Sciatic nerve (tissue), 2 donors: ENCODE measurements at regions of chr18 and their contacts with region 1.

Region 1: DNA sequence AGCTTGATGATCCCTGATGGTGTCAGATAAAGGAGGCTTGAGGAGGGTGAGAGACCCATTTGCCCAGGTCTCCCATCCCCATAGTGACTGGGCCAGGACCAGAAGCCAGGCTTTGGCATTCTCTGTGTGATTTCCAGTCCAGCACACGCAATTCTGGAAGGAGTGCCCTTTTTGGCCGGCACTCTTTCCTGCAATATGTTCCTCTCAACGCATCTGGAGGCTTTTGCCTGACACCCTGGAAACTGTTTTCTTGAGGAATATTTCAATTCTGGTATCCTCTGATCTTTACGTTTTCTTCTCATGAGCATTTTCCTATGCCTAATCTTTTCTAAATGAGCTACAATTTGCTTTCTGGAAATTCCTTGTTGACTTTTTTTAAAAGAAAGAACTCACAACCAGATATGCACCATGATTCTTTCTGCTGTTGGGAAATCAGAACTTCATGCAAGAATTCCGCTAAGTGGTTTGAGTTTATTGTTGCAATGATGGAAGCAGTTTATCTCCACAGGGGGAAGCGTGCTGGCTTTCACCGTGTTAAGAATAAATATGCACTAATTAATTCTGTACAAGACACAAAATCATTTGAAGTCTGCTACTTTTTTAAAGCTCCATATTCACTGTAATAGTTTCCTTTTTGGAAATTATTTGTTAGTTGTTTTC is 143.7 kb downstream of the NAPG start:
- DNase-seq: no peak
- ATAC-seq: peak; percentile 48

Region 2: DNA sequence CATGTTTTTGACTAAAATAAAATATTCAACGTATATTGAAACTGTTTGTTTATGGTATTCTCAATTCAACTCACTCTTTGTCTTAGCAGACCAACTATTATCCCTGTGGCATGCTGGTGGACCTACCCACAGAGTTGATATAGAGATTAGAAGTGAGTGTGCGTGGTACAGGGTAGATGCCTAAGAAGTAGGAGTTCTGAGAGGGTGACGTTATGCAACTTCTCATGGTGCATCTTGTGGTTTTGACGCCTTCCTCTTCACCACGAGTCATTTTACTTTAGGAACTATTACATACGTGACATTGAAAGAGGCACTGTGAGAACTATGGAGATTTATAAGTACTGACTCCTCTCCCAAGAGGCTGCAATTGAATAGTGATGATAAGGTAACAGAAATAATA is 170.3 kb before region 1 on chr18:
- intact Hi-C with region 1: no loop called
- DNase-seq: no peak
- ATAC-seq: no peak

Region 3: GRCh38 chr18:10718809-10719208 is 49.2 kb after region 1 on chr18:
- intact Hi-C with region 1: loop called (anchors 2 kb)
- DNase-seq: no peak
- ATAC-seq: no peak

Region 4: DNA sequence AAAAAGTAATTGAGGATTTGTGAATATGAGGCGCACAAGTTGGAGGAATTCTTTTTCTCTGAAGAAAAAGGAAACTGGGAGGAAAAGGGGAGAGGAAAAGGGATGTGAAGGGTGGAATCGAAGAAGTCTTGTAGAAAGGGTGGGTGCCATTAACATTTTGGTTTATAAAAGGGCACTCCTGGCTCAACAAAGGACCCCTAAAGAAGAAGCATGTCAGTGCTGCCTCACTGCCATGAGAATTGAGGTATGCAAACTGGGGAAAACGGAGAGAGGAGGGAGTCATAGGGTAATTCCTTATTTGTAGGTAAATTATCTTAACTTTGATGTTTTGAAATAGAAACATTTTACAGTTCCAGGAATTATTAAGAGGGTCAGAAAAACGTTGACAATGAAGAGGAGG is 63.4 kb after region 1 on chr18:
- intact Hi-C with region 1: no loop called
- DNase-seq: no peak
- ATAC-seq: no peak

Region 5: GRCh38 chr18:10965119-10965518 is 295.5 kb after region 1 on chr18:
- intact Hi-C with region 1: no loop called
- DNase-seq: no peak
- ATAC-seq: no peak